Esophagus muscularis mucosa (tissue), 4 donors: ENCODE measurements at regions of chr7 and their contacts with region 1.

Region 1: GRCh38 chr7:47254081-47255006 is 327.6 kb downstream of the TNS3 start:
- DNase-seq: no peak
- H3K4me3 ChIP-seq: peak overlapping the region; percentile 58 to 69 (median 66)
- H3K27ac ChIP-seq: peak overlapping the region; percentile 86 to 92 (median 90)
- H3K4me1 ChIP-seq: peaks cover 13 to 34% (median 30%) of the 10 kb centered on the region in 4 donors
- H3K27me3 ChIP-seq: no peaks in the 10 kb centered on the region
- CTCF ChIP-seq: peak; percentile 94 to 100 (median 98)
- EP300 ChIP-seq: no peak
- POLR2A ChIP-seq: no peak

Region 2: DNA sequence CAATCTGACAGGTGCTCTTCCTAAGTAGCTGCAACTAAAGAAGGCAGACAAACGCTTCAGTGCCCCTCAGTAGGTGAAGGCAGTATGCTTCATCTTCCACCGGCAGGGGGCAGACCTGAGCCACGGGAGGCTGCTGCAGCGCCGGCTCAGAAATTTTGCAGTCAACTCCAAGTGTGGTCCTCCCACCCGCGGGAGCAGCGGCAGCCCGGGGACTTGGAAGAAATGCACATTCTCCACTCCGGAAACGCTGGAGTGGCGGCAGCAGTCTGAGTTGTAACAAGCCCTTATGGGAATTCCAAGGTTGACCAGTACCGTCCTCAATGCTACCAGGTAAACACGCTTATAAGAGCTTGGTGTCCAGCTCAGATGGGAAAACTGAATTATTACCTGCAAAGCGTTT is 1336.7 kb before region 1 on chr7:
- intact Hi-C with region 1: loop called (anchors 5 kb)
- DNase-seq: peak; percentile 93
- H3K4me3 ChIP-seq: peak overlapping the region in 3 of 4 donors; percentile 10 to 22 (median 21)
- H3K27ac ChIP-seq: no peak overlapping the region
- H3K4me1 ChIP-seq: peaks cover 26 to 46% (median 42%) of the 10 kb centered on the region in 4 donors
- H3K27me3 ChIP-seq: peaks cover 0 to 74% (median 19%) of the 10 kb centered on the region in 4 donors
- CTCF ChIP-seq: peak; percentile 82 to 97 (median 93)
- EP300 ChIP-seq: no peak
- POLR2A ChIP-seq: no peak

Region 3: GRCh38 chr7:46776790-46777189 is 477.6 kb before region 1 on chr7:
- intact Hi-C with region 1: loop called (anchors 10 kb)
- DNase-seq: no peak
- H3K4me3 ChIP-seq: no peak overlapping the region
- H3K27ac ChIP-seq: no peak overlapping the region
- H3K4me1 ChIP-seq: peaks cover 30 to 44% (median 39%) of the 10 kb centered on the region in 4 donors
- H3K27me3 ChIP-seq: no peaks in the 10 kb centered on the region
- CTCF ChIP-seq: peak in 2 of 3 experiments; percentile 17 to 32
- EP300 ChIP-seq: no peak
- POLR2A ChIP-seq: no peak

Region 4: DNA sequence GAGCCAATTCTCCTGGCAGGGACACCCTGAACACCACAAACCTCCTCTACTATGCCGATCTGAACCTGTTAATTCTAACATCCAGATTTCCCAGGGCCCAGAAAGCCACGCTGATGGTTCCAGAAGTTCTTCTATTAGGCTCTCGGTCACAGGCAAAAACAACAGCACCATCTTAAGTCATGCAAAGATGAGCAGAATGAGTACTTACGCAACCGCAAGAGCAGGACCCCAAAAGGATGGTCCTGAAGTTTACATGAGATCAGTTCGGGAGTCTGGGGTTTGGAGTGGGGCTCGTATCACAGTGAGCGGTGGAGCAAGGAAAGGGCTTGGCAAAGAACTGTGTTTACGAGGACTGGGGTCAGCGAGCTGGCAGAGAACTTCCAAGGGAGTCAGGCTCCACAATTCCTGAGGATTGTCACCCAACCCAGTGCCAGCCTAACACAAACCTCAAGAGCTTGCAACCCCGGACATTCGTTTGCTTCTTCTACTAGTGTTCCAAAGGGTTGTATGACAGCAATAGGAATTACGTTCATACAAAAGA is 205.0 kb before region 1 on chr7:
- intact Hi-C with region 1: no loop called
- DNase-seq: peak; percentile 90
- H3K4me3 ChIP-seq: no peak overlapping the region
- H3K27ac ChIP-seq: no peak overlapping the region
- H3K4me1 ChIP-seq: peaks cover 28 to 33% (median 32%) of the 10 kb centered on the region in 4 donors
- H3K27me3 ChIP-seq: peaks cover 0 to 10% (median 0%) of the 10 kb centered on the region in 4 donors
- CTCF ChIP-seq: no peak
- EP300 ChIP-seq: no peak
- POLR2A ChIP-seq: no peak

Region 5: GRCh38 chr7:47179812-47180515 is 74.4 kb before region 1 on chr7:
- intact Hi-C with region 1: loop called (anchors 2 kb)
- DNase-seq: no peak
- H3K4me3 ChIP-seq: no peak overlapping the region
- H3K27ac ChIP-seq: no peak overlapping the region
- H3K4me1 ChIP-seq: peaks cover 25 to 50% (median 48%) of the 10 kb centered on the region in 4 donors
- H3K27me3 ChIP-seq: no peaks in the 10 kb centered on the region
- CTCF ChIP-seq: peak; percentile 82 to 89 (median 84)
- EP300 ChIP-seq: no peak
- POLR2A ChIP-seq: no peak

Region 6: GRCh38 chr7:48004638-48005037 is 750.3 kb after region 1 on chr7:
- intact Hi-C with region 1: no loop called
- DNase-seq: no peak
- H3K4me3 ChIP-seq: no peak overlapping the region
- H3K27ac ChIP-seq: no peak overlapping the region
- H3K4me1 ChIP-seq: no peaks in the 10 kb centered on the region
- H3K27me3 ChIP-seq: peaks cover 0 to 12% (median 0%) of the 10 kb centered on the region in 4 donors
- CTCF ChIP-seq: no peak
- EP300 ChIP-seq: no peak
- POLR2A ChIP-seq: no peak